ENCODE measurements at regions of chr1 and their contacts with region 1.

Region 1: DNA sequence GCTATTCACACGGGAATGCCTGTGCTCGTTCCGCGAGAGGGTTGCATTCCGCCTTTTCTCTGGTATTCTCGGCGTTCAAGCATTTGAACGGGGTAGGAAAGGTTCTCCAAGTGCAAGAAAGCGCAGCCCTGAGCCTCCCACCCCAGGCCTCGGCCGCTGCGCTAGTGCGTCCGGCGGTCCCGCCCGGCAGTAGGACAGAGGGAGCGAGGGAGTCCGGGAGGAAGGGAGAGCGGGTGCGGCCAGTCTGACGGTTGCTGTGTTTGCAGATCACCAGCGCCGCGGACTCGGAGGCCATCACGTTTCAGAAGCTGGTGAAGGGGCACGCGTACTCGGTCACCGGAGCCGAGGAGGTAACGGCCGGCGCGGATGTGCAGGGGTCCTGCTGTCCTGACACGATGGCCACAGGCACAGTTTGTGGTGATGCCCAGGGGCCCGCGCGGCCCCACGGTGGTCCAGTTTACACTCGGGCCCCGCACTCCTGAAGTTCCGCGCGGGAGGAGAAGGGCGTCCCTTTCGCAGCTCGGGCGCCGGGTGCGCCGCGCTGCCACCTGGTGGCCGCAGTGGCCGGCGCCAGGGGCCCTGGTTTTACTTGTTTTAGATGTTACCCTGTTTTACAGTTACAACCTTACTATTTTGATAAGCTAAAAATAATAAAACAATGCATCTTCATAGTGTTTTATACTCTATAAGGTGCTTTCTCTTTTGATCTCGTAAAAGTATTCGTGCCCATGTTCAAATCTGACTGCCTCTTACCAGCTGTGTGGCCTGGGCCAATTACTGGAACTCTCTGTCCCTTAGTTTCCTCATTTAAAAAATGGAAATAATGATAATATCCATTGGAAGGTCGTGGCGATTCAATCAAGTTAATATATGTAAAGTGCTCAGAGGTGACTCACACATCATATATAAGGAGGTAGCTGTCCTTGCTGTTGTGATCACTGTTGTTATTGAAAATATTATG is 36.7 kb downstream of the CAPN2 start:
- DNase-seq: peak; percentile 63
- H3K4me3 Mint-ChIP-seq: peak overlapping the region; percentile 59
- H3K27ac Mint-ChIP-seq: no peak overlapping the region
- H3K4me1 Mint-ChIP-seq: peaks cover 3% of the 10 kb centered on the region
- H3K27me3 Mint-ChIP-seq: no peaks in the 10 kb centered on the region

Region 2: DNA sequence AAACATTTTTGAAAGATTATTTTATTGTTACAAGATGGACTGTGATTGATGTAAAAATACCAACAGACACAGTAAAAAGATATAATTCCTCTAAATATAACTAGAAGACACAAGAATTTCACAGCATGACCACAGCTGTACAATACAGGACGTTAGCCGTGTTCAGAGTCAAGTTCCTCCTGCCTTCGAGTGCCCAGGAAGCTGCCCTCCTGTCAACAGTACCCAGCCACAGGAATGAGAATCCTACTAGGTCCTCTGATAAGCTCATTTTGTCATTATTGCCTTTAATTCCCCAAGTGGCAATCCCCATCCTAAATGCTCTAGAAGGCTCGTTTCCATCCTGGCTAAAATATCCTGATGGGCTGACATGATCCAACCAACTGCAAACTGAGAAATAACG is 53.1 kb before region 1 on chr1:
- CTCF ChIA-PET with region 1: interaction called, 80 read pairs
- intact Hi-C with region 1: loop called (anchors 2 kb)
- DNase-seq: no peak
- H3K4me3 Mint-ChIP-seq: no peak overlapping the region
- H3K27ac Mint-ChIP-seq: no peak overlapping the region
- H3K4me1 Mint-ChIP-seq: peaks cover 7% of the 10 kb centered on the region
- H3K27me3 Mint-ChIP-seq: no peaks in the 10 kb centered on the region

Region 3: GRCh38 chr1:223712194-223712849 is 36.7 kb before region 1 on chr1 and contains the start of gene CAPN2:
- CTCF ChIA-PET with region 1: interaction called, 37 read pairs
- intact Hi-C with region 1: loop called (anchors 1 kb)
- DNase-seq: peak; percentile 65
- H3K4me3 Mint-ChIP-seq: peak within 1 kb of the TSS; percentile 75
- H3K27ac Mint-ChIP-seq: peak within 1 kb of the TSS; percentile 41
- H3K4me1 Mint-ChIP-seq: peaks cover 52% of the 10 kb centered on the region
- H3K27me3 Mint-ChIP-seq: no peaks in the 10 kb centered on the region
- total RNA-seq, gene CAPN2: 17.0 to 19.5 TPM

Region 4: DNA sequence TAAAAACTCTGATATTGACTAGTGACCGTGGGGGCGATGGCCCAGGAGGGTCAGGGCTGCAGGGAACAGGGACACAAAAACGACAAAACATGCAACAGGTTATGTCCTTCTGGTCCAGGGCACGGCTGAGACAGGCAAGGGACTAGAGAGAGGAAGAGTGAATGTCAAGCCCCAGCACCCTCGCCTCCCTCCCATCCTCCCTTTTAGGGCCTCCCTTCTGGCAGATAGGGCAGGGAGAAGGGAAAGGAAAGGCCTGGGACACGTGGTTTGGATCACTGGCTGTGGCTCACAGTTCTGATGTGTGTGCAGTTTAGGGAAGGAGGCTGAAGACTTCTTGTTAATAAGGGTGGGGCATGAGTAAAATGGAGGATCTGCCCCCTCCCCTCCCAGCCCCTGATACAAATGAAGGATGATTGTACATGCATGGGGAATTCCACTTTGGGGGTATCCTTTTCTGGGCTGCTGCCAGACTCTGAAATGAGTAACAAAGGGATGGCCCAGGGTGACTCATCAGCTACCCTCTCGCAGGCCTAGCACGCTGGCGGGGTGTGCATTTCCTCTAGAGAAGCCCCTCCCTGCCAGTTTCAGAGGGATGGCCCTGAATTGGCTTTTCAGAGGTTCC is 22.6 kb before region 1 on chr1:
- CTCF ChIA-PET with region 1: interaction called, 23 read pairs
- intact Hi-C with region 1: loop called (anchors 2 kb)
- DNase-seq: peak; percentile 98
- H3K4me3 Mint-ChIP-seq: peak overlapping the region; percentile 52
- H3K27ac Mint-ChIP-seq: peak overlapping the region; percentile 65
- H3K4me1 Mint-ChIP-seq: peaks cover 57% of the 10 kb centered on the region
- H3K27me3 Mint-ChIP-seq: no peaks in the 10 kb centered on the region

Region 5: DNA sequence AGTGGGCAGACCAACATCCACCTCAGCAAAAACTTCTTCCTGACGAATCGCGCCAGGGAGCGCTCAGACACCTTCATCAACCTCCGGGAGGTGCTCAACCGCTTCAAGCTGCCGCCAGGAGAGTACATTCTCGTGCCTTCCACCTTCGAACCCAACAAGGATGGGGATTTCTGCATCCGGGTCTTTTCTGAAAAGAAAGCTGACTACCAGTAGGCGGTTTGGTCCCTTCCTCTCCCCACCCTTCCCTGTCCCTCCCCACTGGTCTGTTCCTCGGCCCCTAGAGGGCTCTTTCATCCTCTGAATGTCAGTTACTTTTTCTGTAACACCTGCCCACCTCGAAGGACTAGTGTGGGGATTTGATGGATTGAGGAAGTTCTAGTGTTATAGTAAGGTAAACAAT is 10.2 kb after region 1 on chr1:
- CTCF ChIA-PET with region 1: interaction called, 12 read pairs
- intact Hi-C with region 1: no loop called
- DNase-seq: peak; percentile 11
- H3K4me3 Mint-ChIP-seq: no peak overlapping the region
- H3K27ac Mint-ChIP-seq: no peak overlapping the region
- H3K4me1 Mint-ChIP-seq: no peaks in the 10 kb centered on the region
- H3K27me3 Mint-ChIP-seq: no peaks in the 10 kb centered on the region